CD8-positive, alpha-beta T cell (primary cell): ENCODE measurements at regions of chr17 and their contacts with region 1.

Region 1: GRCh38 chr17:18038861-18039534 is at the starts of genes ATPAF2 and GID4:
- DNase-seq: peak; percentile 99 to 100 (median 100)
- ATAC-seq: peak; percentile 90
- H3K4me3 ChIP-seq: peak within 1 kb of the TSS; percentile 85 to 92
- H3K4me3 Mint-ChIP-seq: peak within 1 kb of the TSS; percentile 92
- H3K27ac ChIP-seq: peak within 1 kb of the TSS; percentile 63 to 84
- H3K27ac Mint-ChIP-seq: peak within 1 kb of the TSS; percentile 91
- H3K4me1 ChIP-seq: peaks cover 34% of the 10 kb centered on the region
- H3K4me1 Mint-ChIP-seq: peaks cover 56% of the 10 kb centered on the region
- H3K27me3 ChIP-seq: no peaks in the 10 kb centered on the region
- H3K27me3 Mint-ChIP-seq: no peaks in the 10 kb centered on the region
- CTCF ChIP-seq: no peak
- total RNA-seq, gene ATPAF2: 16.8 to 24.5 TPM
- total RNA-seq, gene GID4: 2.7 to 5.0 TPM

Region 2: DNA sequence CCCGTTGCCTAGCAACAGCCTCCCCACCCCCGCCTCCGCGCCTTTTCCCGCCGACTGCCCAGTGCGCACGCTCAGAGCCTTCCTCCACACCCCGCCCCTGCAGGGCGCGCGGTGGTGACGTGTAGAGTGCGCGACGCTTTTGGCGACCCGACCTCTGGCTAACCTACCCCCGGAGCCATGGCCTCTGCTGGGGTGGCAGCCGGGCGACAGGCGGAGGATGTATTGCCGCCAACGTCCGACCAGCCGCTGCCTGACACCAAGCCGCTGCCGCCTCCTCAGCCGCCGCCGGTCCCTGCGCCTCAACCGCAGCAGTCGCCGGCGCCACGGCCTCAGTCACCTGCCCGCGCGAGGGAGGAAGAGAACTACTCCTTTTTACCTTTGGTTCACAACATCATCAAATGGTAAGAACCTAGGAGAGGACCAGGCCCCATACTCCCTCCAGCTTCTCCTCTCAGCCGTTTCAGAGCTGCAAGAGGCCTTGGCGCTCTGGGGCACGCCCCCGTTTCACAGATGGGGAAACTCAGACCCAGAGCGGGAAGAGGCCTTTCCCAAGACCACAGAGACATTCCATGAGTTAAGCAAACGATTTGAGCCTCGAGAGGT is 562.0 kb before region 1 on chr17 and contains the start of gene MED9:
- CTCF ChIA-PET with region 1: no interaction called
- POLR2A ChIA-PET with region 1: no interaction called
- intact Hi-C with region 1: loop called in 1 of 2 experiments (anchors 5 kb)
- DNase-seq: peak; percentile 87 to 97 (median 95)
- ATAC-seq: peak; percentile 100
- H3K4me3 ChIP-seq: peak within 1 kb of the TSS; percentile 88 to 96
- H3K4me3 Mint-ChIP-seq: peak within 1 kb of the TSS; percentile 89
- H3K27ac ChIP-seq: peak within 1 kb of the TSS; percentile 83 to 89
- H3K27ac Mint-ChIP-seq: peak within 1 kb of the TSS; percentile 89
- H3K4me1 ChIP-seq: peaks cover 32% of the 10 kb centered on the region
- H3K4me1 Mint-ChIP-seq: peaks cover 46% of the 10 kb centered on the region
- H3K27me3 ChIP-seq: no peaks in the 10 kb centered on the region
- H3K27me3 Mint-ChIP-seq: no peaks in the 10 kb centered on the region
- CTCF ChIP-seq: no peak
- total RNA-seq, gene MED9: 35.4 to 35.9 TPM

Region 3: DNA sequence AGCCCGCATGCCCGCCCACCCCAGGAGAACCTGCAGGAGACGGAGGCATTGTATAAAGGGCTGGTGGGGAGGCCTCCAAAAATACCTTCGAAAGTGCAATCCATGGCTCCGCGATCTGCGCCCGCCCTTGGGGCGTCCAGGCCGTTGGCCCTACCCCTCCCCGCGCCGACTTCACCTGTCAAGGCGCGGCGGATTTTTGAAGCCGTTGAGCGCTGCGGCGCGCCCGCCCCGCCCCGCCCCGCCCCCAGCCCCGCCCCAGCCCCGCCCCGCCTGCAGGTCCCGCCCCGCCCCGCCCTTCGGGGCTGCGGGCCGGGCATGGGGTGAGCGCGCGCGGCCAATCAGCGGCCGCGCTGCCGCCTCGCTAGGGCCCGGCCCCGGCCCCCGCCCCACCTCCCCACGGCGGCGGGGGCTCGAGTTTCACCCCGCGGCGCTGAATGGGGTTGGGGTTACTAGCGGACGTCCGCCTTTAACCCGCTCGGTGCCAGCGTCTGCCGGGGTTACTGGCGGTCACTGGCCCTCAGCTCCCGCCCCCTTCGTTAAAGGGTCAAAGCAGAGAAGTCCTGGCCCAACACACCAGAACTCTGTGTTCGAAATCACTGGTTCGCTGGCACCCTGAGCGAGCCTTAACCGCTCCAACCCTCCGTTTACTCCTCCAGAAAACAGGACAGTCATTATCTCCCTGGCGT is 215.4 kb before region 1 on chr17:
- CTCF ChIA-PET with region 1: no interaction called
- POLR2A ChIA-PET with region 1: no interaction called
- intact Hi-C with region 1: loop called in 1 of 2 experiments (anchors 5 kb)
- DNase-seq: peak; percentile 63 to 92 (median 80)
- ATAC-seq: peak; percentile 87
- H3K4me3 ChIP-seq: peak overlapping the region; percentile 46 to 55
- H3K4me3 Mint-ChIP-seq: peak overlapping the region; percentile 81
- H3K27ac ChIP-seq: peak overlapping the region; percentile 50 to 85
- H3K27ac Mint-ChIP-seq: peak overlapping the region; percentile 95
- H3K4me1 ChIP-seq: peaks cover 95% of the 10 kb centered on the region
- H3K4me1 Mint-ChIP-seq: peaks cover 91% of the 10 kb centered on the region
- H3K27me3 ChIP-seq: no peaks in the 10 kb centered on the region
- H3K27me3 Mint-ChIP-seq: no peaks in the 10 kb centered on the region
- CTCF ChIP-seq: no peak

Region 4: GRCh38 chr17:18087610-18088491 is 48.9 kb after region 1 on chr17 and contains the start of gene DRG2:
- CTCF ChIA-PET with region 1: interaction called, 4 read pairs
- POLR2A ChIA-PET with region 1: no interaction called
- intact Hi-C with region 1: loop called (anchors 1 kb)
- DNase-seq: peak; percentile 79 to 94 (median 88)
- ATAC-seq: peak; percentile 91
- H3K4me3 ChIP-seq: peak within 1 kb of the TSS; percentile 80 to 90
- H3K4me3 Mint-ChIP-seq: peak within 1 kb of the TSS; percentile 99
- H3K27ac ChIP-seq: peak within 1 kb of the TSS; percentile 78 to 87
- H3K27ac Mint-ChIP-seq: peak within 1 kb of the TSS; percentile 98
- H3K4me1 ChIP-seq: peaks cover 15% of the 10 kb centered on the region
- H3K4me1 Mint-ChIP-seq: peaks cover 33% of the 10 kb centered on the region
- H3K27me3 ChIP-seq: no peaks in the 10 kb centered on the region
- H3K27me3 Mint-ChIP-seq: no peaks in the 10 kb centered on the region
- CTCF ChIP-seq: no peak
- total RNA-seq, gene DRG2: 45.4 to 46.3 TPM

Region 5: DNA sequence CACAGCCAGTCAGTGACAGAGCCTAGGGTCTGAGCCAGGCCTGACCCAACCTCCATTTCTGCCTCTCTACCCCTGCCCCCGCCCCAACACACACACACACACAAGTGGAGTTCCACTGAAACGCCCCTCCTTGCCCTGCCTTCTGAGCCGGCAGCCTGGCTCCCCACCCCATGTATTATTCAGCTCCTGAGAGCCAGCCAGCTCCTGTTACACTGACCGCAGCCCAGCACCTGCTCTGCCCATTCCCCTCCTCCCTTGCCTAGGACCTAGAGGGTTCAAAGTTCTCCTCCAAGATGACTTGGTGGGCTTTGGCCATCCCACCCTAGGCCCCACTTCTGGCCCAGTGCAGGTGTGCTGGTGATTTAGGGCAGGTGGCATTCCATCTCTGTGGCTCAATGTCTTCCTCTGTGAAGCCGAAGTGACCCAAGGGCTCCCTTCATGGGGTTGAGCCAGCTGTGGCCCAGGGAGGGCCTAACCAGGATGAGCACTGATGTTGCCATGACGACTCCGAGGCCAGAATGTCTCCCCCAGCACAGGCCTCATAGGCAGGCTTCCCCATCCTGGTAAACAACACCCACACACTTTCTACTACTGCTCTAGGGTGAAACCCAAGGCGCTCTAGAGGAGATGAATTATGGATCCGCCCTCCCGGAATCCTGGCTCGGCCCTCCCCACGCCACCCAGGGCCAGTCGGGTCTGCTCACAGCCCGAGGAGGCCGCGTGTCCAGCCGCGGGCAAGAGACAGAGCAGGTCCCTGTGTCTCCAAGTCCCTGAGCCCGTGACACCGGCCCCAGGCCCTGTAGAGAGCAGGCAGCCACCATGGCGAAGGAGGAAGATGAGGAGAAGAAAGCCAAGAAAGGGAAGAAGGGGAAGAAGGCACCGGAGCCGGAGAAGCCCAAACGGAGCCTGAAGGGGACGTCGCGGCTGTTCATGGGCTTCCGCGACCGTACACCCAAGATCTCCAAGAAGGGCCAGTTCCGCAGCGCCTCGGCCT is 79.3 kb after region 1 on chr17:
- CTCF ChIA-PET with region 1: no interaction called
- POLR2A ChIA-PET with region 1: no interaction called
- intact Hi-C with region 1: no loop called
- DNase-seq: no peak
- ATAC-seq: no peak
- H3K4me3 ChIP-seq: no peak overlapping the region
- H3K4me3 Mint-ChIP-seq: no peak overlapping the region
- H3K27ac ChIP-seq: no peak overlapping the region
- H3K27ac Mint-ChIP-seq: no peak overlapping the region
- H3K4me1 ChIP-seq: no peaks in the 10 kb centered on the region
- H3K4me1 Mint-ChIP-seq: no peaks in the 10 kb centered on the region
- H3K27me3 ChIP-seq: no peaks in the 10 kb centered on the region
- H3K27me3 Mint-ChIP-seq: peaks cover 2% of the 10 kb centered on the region
- CTCF ChIP-seq: no peak